ENCODE measurements at regions of chr1 and their contacts with region 1.

Region 1: DNA sequence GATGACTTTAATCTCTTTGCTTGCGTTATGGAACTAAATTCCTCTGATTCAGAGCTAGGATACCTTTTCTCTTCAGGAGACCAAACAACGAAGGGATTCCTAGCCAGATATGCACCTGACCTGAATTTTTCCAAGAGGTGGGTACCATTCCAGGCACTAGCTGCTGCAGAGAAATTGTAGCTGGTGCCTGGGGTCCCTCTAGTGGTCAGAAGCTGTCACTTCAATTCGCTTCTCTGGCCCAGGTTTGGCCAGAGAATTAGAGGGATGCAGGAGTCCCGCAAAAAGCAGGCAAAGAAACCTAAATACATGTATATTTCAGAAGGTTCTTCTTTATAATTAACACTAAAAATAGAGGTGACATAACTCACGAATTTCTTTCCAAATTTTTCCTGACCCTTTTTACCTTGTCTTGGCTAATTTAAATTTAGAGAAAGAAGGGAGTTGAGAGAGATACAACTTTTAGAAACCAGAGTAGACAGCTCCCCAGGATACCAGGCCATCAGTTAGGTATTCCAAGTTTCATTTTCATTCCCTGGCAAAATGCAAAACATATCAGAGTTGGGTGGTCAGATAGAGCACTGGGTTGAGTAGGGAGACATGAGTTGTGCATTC is 9.6 kb downstream of the ACKR1 start:
- DNase-seq: no peak
- H3K4me3 ChIP-seq: no peak overlapping the region
- CTCF ChIP-seq: peak; percentile 85

Region 2: DNA sequence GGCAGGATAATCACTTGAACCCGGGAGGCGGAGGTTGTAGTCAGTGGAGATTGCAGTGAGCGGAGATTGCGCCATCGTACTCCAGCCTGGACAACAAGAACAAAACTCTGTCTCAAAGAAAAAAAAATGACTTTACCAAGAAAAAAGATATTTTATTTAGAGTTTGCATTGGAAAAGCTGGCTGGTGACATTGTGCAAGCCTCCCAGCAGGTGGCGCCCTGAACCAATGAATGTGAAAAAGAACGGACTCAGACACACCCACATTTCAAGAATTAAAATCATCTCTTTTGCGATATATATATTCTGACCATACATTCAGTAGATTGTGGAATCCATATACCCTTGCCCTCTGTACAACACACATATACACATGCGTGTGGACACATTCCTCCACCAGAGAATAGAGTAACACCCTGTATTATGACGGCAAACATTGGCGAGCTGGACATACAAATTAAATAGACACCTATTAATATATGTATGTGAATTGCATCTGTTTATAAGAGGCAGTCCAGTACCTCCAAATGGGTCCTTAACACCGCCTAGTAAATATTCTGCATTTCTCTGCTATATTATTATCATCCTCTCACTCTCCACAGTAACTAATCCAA is 81.9 kb before region 1 on chr1:
- CTCF ChIA-PET with region 1: interaction called, 51 read pairs
- POLR2A ChIA-PET with region 1: no interaction called
- DNase-seq: no peak
- H3K4me3 ChIP-seq: no peak overlapping the region
- CTCF ChIP-seq: peak; percentile 77

Region 3: GRCh38 chr1:159161001-159161718 is 53.1 kb before region 1 on chr1:
- CTCF ChIA-PET with region 1: interaction called, 104 read pairs
- POLR2A ChIA-PET with region 1: no interaction called
- DNase-seq: peak; percentile 63
- H3K4me3 ChIP-seq: peak overlapping the region; percentile 28; the same call in 1 of the 2 replicates
- CTCF ChIP-seq: peak; percentile 96

Region 4: DNA sequence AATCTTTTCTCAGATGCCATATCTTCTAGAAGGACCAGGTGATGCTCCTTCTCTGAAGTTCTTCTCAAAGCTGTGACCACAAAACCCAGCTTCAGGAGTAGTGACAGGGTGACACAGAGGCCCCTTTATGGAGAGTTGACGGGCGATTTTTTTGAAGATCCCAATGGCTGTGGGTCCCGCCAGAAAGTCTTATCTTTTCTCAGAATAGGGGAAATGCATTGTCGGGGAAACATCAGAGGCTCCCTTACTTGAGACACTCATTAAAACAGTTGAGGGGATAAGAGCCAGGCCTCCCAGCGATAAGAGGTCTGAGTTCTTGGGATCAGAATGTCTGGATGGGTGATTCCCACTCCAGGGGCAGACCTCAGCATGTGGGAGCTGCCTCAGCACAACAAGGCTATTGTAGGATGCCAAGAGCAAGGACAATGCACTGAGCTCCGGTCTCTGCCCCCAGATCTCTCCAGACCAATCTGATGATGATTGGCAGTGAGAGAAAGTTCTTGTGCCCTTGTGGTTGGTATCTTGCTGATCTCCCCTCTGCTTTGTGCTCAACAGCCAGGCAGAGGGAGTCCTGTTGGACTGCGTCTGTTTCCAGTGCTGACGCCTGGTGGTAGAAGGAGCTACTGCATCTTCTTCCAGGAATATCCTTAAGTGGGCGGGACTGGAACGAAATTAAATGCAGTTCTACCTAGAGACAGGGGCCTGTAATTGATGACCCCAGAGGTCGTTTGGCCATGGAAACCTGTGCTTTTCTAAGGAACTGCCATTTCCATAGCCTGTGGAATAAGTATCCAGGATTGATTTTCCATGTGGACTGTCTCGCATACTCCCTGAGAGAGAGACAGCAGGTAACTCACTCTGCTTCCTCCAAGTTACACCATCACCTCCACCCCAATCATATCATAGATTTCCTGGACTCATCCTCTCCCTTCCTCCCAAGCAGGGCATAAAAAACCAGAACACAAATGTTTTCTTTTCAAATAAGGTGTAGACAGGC is 16.4 kb before region 1 on chr1:
- CTCF ChIA-PET with region 1: interaction called, 119 read pairs
- POLR2A ChIA-PET with region 1: no interaction called
- DNase-seq: peak; percentile 12
- H3K4me3 ChIP-seq: no peak overlapping the region
- CTCF ChIP-seq: peak; percentile 91

Region 5: DNA sequence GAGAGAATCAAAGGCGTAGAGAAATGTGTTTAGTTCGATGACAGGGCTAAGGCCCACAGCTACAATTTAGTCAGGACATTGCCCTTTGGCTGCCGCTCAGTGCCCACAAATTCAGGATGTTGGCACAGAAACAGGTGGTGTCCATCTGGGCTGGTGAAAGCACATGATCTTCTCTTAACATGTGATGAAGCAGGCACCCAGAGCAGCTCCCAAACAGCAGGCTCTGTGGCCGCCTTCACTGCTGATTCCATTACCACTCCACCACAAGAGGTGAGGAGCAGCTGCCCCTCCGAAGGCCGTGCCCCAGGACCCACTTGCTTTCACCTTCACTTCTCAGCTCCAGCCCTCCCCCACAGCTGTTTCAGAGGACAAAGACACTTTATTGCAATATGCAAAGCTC is 15.2 kb after region 1 on chr1:
- CTCF ChIA-PET with region 1: interaction called, 16 read pairs
- POLR2A ChIA-PET with region 1: no interaction called
- DNase-seq: no peak
- H3K4me3 ChIP-seq: no peak overlapping the region
- CTCF ChIP-seq: no peak

Region 6: GRCh38 chr1:159775716-159776115 is 561.5 kb after region 1 on chr1:
- CTCF ChIA-PET with region 1: interaction called, 11 read pairs
- POLR2A ChIA-PET with region 1: no interaction called
- DNase-seq: no peak
- H3K4me3 ChIP-seq: no peak overlapping the region
- CTCF ChIP-seq: no peak